Dendritic cell treated with granulocyte-macrophage colony-stimulating factor and Interleukin-4, amounts not matched to agents 40 ng/mL and 50 ng/mL, for 4 days (primary cell): ENCODE measurements at regions of chr19 and their contacts with region 1.

Region 1: GRCh38 chr19:11435058-11435832 is at the starts of genes ODAD3 and PRKCSH:
- H3K4me3 Mint-ChIP-seq: peak within 1 kb of the TSS; percentile 99
- H3K27ac Mint-ChIP-seq: peak within 1 kb of the TSS; percentile 91
- H3K4me1 Mint-ChIP-seq: peaks cover 28% of the 10 kb centered on the region
- H3K27me3 Mint-ChIP-seq: peaks cover 8% of the 10 kb centered on the region

Region 2: DNA sequence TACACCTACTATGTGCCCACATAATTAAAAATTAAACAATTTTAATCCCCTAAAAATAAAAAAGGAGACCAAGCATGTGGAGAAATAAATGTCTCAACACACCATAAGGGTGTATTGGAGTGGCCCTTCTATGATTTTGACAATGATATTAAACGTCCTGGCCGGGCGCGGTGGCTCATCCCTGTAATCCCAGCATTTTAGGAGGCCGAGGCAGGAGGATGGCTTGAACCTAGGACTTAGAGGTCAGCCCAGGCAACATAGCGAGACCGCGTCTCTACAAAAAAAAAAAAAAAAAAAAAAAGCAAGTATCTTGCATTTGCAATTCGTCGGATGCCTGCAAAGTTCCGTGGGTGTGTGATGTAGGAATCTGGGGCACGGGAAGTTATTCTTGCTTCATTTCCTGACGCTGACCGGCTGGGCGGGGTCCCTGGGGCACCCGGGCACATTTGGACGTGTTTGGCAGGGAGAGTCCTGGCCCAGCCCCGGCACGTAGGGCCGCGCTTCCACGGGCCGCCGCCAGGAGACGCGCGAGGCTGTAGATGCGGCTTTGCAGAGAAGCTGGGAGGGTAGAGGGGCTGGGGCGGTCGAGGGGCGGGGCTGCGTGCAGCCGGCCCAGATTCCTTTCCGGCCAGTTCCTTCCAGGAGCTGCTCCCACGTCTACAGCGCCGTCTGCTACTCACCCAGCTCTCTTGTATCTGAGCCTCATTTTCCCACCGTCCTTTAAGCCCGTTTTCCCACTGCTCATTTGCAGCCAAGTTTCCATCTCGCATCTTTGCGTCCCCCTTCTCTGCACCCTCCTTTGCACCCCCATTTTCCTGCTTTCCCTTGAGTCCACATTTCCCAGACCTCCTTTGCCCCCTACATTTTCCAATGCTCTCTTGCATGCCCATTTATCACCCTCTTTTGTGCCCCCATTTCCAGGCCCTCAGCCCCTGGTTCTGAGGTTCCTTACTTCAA is 141.5 kb before region 1 on chr19:
- intact Hi-C with region 1: loop called (anchors 5 kb)
- H3K4me3 Mint-ChIP-seq: peak overlapping the region; percentile 61
- H3K27ac Mint-ChIP-seq: peak overlapping the region; percentile 48
- H3K4me1 Mint-ChIP-seq: peaks cover 53% of the 10 kb centered on the region
- H3K27me3 Mint-ChIP-seq: peaks cover 4% of the 10 kb centered on the region

Region 3: DNA sequence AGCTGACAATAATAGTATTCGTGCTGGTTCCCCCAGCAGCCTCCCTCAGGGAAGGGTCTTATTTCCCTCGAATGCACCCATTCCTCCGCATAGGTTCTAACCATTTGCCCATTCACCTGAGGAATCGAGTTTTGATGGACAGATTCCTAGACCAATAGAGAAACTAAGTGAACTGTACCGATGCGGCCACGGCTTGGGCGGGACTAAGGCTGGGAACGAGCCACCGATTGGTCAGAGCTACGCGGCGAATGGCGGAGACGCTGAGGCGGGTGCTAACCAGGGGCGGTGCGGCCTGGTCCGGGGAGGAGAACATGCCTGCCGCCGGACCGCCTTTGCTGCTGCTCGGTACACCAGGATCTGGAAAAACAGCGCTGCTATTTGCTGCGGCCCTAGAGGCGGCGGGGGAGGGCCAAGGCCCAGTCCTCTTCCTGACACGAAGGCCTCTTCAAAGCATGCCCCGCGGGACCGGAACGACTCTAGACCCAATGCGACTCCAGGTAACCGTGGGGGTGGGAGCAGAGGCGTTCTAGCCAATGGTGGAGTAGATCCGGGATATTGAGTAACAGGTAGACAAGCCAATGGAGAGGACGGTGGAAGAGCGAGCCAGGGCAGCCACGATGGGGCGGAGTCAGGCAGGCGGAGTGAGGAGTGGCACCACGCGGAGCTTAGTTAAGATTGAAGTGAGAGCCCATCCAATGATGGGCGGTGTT is 60.7 kb before region 1 on chr19 and contains the start of gene SWSAP1:
- intact Hi-C with region 1: loop called (anchors 1 kb)
- H3K4me3 Mint-ChIP-seq: no peak within 1 kb of the TSS
- H3K27ac Mint-ChIP-seq: no peak within 1 kb of the TSS
- H3K4me1 Mint-ChIP-seq: peaks cover 29% of the 10 kb centered on the region
- H3K27me3 Mint-ChIP-seq: no peaks in the 10 kb centered on the region

Region 4: DNA sequence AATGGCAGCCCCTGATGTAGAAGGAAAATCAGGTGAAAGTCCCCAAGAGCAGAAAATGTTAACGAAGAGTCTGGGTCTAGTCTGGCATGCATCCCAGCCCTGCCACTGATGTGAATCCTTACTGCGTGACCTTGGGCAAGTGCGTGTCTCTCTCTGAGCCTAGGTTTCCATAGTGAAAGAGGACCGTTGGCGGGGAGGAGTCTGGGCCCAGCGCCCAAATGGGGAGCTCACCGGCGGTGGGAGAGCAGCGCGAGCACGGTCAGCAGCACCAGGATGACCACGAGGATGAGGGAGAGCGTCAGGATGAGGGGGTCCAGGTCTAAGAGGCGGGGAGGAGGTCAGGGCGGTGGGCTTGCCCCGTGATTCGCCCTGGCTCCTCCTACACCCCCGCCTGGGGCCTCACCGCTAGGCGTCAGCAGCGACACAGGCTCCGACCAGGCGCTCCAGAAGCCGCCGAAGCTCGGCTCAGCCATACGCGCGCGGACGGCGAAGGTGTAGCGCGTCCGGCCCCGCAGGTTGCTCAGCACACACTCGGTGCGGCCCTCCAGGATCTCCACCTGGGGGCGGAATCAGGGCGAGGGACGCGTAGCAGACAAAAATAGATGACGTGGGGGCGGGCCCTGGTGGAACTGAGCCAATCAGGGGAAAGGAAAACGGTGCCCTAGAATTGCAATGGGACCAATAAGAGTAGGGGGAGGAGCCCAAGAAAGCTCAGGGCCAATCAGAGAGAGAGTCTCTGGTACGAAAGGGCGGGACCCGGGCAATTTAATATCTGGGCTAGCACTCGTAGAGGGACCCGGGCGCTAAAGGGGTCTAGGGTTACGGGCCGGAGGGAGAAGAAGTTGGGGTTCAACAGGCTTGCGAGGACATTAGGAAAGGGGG is 54.4 kb before region 1 on chr19:
- intact Hi-C with region 1: loop called (anchors 1 kb)
- H3K4me3 Mint-ChIP-seq: peak overlapping the region; percentile 83
- H3K27ac Mint-ChIP-seq: peak overlapping the region; percentile 82
- H3K4me1 Mint-ChIP-seq: peaks cover 66% of the 10 kb centered on the region
- H3K27me3 Mint-ChIP-seq: peaks cover 28% of the 10 kb centered on the region

Region 5: GRCh38 chr19:11399667-11400066 is 35.6 kb before region 1 on chr19:
- intact Hi-C with region 1: no loop called
- H3K4me3 Mint-ChIP-seq: no peak overlapping the region
- H3K27ac Mint-ChIP-seq: no peak overlapping the region
- H3K4me1 Mint-ChIP-seq: peaks cover 5% of the 10 kb centered on the region
- H3K27me3 Mint-ChIP-seq: peaks cover 19% of the 10 kb centered on the region

Region 6: DNA sequence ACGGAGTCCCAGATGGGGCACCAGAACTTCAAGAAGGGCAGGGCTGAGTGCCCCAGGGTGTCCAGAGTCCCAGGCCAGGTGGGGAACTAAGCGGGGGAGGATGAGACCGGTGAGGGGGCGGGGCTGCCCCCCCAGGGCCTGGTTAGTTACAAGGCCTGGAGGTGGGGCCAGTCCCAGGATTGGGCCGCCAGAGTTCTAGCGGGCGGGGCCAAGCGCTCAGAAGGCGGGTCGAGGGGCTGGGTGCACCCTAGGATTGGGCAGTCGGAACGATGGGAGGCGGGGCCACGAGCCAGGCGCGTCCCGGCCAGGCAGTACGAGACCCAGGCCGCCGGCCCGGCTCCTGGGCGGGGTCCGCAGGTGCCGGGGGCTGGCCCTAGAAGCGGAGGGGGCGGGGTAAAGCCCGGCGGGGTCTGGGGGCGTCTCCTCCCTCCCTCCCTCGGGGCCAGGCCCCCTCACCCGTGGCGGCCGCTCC is 69.8 kb after region 1 on chr19:
- intact Hi-C with region 1: loop called (anchors 1 kb)
- H3K4me3 Mint-ChIP-seq: peak overlapping the region; percentile 74
- H3K27ac Mint-ChIP-seq: peak overlapping the region; percentile 80
- H3K4me1 Mint-ChIP-seq: peaks cover 23% of the 10 kb centered on the region
- H3K27me3 Mint-ChIP-seq: no peaks in the 10 kb centered on the region